HepG2 (cell line): ENCODE measurements at regions of chr20 and their contacts with region 1.

Region 1: DNA sequence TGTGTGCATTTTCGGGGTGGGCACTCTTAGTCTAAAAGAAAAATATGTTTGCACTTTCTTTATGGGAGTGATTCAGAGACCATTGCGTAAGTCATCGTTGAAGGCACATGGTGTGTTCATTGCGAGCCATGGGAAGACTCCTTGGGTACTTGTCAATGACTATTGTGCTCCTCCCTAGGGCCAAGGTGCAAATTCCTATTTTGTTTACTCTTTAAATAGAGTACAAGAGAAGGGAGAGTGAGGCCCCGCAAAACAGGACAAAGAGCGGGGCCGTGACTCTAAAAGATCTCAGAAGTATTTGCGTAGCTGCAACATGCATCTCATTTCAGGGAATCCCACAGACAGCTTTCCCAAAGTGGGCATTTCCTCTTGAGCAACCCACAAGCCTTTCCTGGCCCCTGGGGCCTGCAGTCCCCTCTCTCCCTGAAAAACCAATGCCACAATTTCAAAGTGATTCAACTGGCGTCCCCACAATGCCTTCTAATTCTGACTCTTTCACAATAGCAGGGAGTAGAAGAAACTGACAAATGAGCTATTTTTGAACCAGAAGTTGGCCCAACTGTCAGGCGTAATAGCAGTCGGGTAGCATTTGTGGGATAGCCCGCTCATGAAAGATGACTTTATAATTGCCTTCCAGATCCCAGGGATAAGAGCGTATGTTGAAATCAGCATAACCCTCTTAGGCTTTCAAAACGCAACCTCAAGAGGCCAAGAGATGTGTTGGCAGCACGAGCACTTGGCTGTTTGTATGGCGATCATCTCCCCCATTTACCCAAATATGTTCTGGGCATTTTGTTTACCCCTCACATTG is 277.9 kb upstream of the BMP2 start:
- DNase-seq: peak; percentile 86
- ATAC-seq: peak; percentile 71
- H3K4me3 ChIP-seq: no peak overlapping the region; a peak in 1 of 6 replicates
- H3K27ac ChIP-seq: peak overlapping the region; percentile 39
- H3K4me1 ChIP-seq: peaks cover 44% of the 10 kb centered on the region
- H3K27me3 ChIP-seq: no peaks in the 10 kb centered on the region
- CTCF ChIP-seq: no peak
- EP300 ChIP-seq: peak in 1 of 2 experiments; percentile 66; a peak in 2 of 4 replicates
- POLR2A ChIP-seq: no peak
- RAD21 ChIP-seq: no peak

Region 2: GRCh38 chr20:6421321-6422248 is 68.0 kb before region 1 on chr20:
- CTCF ChIA-PET with region 1: no interaction called
- POLR2A ChIA-PET with region 1: no interaction called
- in situ Hi-C with region 1: loop called (anchors 10 kb)
- intact Hi-C with region 1: no loop called
- DNase-seq: no peak
- ATAC-seq: no peak
- H3K4me3 ChIP-seq: no peak overlapping the region
- H3K27ac ChIP-seq: no peak overlapping the region
- H3K4me1 ChIP-seq: no peaks in the 10 kb centered on the region
- H3K27me3 ChIP-seq: no peaks in the 10 kb centered on the region
- CTCF ChIP-seq: no peak
- EP300 ChIP-seq: no peak
- POLR2A ChIP-seq: no peak
- RAD21 ChIP-seq: no peak

Region 3: DNA sequence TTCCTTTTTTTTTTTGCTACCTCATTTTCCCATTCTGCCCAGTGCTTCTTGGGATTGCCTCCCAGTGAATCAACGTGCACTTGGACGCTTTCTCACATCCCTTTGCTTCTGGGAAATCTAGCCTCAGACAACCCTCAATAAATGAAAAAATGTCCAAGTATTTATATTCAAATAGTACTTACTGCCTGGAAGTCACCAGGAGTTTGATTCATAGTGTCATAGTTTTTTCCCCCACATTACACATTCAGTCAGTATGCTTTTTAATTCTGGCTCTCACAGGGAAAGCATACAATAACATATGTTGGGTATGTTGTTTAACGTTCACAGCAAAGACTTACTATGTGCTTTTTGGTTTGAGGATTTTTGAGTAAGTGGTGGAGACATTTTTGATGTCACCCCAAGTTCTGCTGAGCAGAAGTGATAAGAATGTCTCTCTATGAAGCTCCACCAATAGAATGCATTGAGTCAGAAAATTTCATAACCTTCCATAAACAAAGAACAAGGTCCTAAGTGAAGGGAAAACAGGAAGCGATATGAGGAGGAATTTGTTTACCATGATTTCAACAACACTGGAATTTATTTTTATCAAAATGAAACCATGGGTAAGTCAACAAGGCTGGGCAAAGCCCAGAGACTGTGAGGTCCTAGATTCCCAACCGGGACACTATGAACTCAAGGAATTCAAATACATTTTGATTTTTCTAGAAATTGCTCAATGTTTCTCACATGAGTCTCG is 23.3 kb before region 1 on chr20:
- CTCF ChIA-PET with region 1: no interaction called
- POLR2A ChIA-PET with region 1: interaction called, 11 read pairs
- in situ Hi-C with region 1: no loop called
- intact Hi-C with region 1: no loop called
- DNase-seq: peak; percentile 68
- ATAC-seq: peak; percentile 91
- H3K4me3 ChIP-seq: no peak overlapping the region
- H3K27ac ChIP-seq: no peak overlapping the region
- H3K4me1 ChIP-seq: peaks cover 14% of the 10 kb centered on the region
- H3K27me3 ChIP-seq: no peaks in the 10 kb centered on the region
- CTCF ChIP-seq: no peak
- EP300 ChIP-seq: peak in 1 of 2 experiments; percentile 45; a peak in 2 of 4 replicates
- POLR2A ChIP-seq: no peak
- RAD21 ChIP-seq: no peak

Region 4: GRCh38 chr20:7889736-7890135 is 1400.2 kb after region 1 on chr20:
- CTCF ChIA-PET with region 1: no interaction called
- POLR2A ChIA-PET with region 1: no interaction called
- in situ Hi-C with region 1: no loop called
- intact Hi-C with region 1: loop called (anchors 5 kb)
- DNase-seq: no peak
- ATAC-seq: no peak
- H3K4me3 ChIP-seq: no peak overlapping the region
- H3K27ac ChIP-seq: no peak overlapping the region
- H3K4me1 ChIP-seq: no peaks in the 10 kb centered on the region
- H3K27me3 ChIP-seq: no peaks in the 10 kb centered on the region
- CTCF ChIP-seq: no peak
- EP300 ChIP-seq: no peak
- POLR2A ChIP-seq: no peak
- RAD21 ChIP-seq: no peak